Activated T-helper 2 cell treated with anti-CD3 and anti-CD28 coated beads, Interferon-gamma antibody, Interleukin-2, Interleukin-4, amounts not matched to agents 10 μg/mL and 5 μg/mL and 100 μg/mL, durations not matched to agents 14 hours and 24 hours and 36 hours (primary cell): ENCODE measurements at regions of chr1 and their contacts with region 1.

Region 1: GRCh38 chr1:150162862-150163706 is 13.4 kb downstream of the PLEKHO1 start:
- DNase-seq: no peak
- H3K4me3 Mint-ChIP-seq: no peak overlapping the region
- H3K27ac Mint-ChIP-seq: no peak overlapping the region
- H3K4me1 Mint-ChIP-seq: peaks cover 45% of the 10 kb centered on the region
- H3K27me3 Mint-ChIP-seq: peaks cover 3% of the 10 kb centered on the region

Region 2: GRCh38 chr1:150072959-150073358 is 90.1 kb before region 1 on chr1:
- intact Hi-C with region 1: loop called (anchors 1 kb)
- DNase-seq: no peak
- H3K4me3 Mint-ChIP-seq: no peak overlapping the region
- H3K27ac Mint-ChIP-seq: no peak overlapping the region
- H3K4me1 Mint-ChIP-seq: peaks cover 26% of the 10 kb centered on the region
- H3K27me3 Mint-ChIP-seq: no peaks in the 10 kb centered on the region